ENCODE measurements at regions of chr12 and their contacts with region 1.

Region 1: GRCh38 chr12:7995266-7995963 is 37.1 kb upstream of the FOXJ2 start:
- DNase-seq: peak; percentile 74
- H3K4me3 Mint-ChIP-seq: no peak overlapping the region
- H3K27ac Mint-ChIP-seq: no peak overlapping the region
- H3K4me1 Mint-ChIP-seq: peaks cover 21% of the 10 kb centered on the region
- H3K27me3 Mint-ChIP-seq: no peaks in the 10 kb centered on the region

Region 2: DNA sequence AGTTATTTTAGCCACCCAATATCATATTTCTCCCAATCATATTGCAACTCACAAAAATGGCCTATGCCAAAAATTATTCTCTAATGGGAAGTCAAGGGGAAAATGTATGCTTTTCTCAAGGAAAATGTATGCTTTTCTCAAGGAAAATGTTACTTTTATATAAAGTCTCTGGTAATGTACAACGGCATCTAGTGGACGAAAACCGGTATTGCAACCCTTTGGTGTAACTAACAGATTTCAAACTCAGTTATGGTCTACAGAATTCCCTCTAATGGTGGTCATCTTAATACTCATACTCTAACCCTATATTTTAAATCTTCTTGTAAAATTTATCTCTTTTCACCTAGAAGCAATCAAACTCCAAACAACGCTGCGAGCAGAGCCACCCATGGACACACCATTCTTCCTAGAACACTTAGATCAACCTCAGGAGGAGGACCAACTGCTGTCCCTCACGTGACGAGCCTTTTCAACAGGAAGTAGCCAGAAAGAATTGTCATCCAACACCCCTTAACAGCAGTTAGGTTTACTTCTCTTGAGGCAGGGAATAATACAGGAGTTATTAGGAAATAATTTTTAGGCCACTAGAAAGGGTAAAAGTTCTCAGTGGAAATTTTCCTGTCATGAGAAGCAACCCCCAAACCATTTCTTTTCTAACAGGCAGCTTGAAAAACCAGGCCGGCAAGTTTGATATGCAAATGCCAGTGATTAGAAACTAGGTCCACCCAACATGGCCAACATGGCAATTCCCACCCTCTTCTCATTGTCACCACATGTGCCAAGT is 349.8 kb before region 1 on chr12:
- intact Hi-C with region 1: loop called (anchors 10 kb)
- DNase-seq: no peak
- H3K4me3 Mint-ChIP-seq: no peak overlapping the region
- H3K27ac Mint-ChIP-seq: no peak overlapping the region
- H3K4me1 Mint-ChIP-seq: peaks cover 6% of the 10 kb centered on the region
- H3K27me3 Mint-ChIP-seq: peaks cover 5% of the 10 kb centered on the region

Region 3: GRCh38 chr12:7859552-7859951 is 135.9 kb before region 1 on chr12:
- intact Hi-C with region 1: loop called (anchors 1 kb)
- DNase-seq: no peak
- H3K4me3 Mint-ChIP-seq: no peak overlapping the region
- H3K27ac Mint-ChIP-seq: no peak overlapping the region
- H3K4me1 Mint-ChIP-seq: peaks cover 21% of the 10 kb centered on the region
- H3K27me3 Mint-ChIP-seq: peaks cover 9% of the 10 kb centered on the region

Region 4: GRCh38 chr12:7959701-7960121 is 35.7 kb before region 1 on chr12:
- intact Hi-C with region 1: loop called (anchors 1 kb)
- DNase-seq: peak; percentile 56
- H3K4me3 Mint-ChIP-seq: peak overlapping the region; percentile 92
- H3K27ac Mint-ChIP-seq: peak overlapping the region; percentile 97
- H3K4me1 Mint-ChIP-seq: peaks cover 52% of the 10 kb centered on the region
- H3K27me3 Mint-ChIP-seq: no peaks in the 10 kb centered on the region

Region 5: DNA sequence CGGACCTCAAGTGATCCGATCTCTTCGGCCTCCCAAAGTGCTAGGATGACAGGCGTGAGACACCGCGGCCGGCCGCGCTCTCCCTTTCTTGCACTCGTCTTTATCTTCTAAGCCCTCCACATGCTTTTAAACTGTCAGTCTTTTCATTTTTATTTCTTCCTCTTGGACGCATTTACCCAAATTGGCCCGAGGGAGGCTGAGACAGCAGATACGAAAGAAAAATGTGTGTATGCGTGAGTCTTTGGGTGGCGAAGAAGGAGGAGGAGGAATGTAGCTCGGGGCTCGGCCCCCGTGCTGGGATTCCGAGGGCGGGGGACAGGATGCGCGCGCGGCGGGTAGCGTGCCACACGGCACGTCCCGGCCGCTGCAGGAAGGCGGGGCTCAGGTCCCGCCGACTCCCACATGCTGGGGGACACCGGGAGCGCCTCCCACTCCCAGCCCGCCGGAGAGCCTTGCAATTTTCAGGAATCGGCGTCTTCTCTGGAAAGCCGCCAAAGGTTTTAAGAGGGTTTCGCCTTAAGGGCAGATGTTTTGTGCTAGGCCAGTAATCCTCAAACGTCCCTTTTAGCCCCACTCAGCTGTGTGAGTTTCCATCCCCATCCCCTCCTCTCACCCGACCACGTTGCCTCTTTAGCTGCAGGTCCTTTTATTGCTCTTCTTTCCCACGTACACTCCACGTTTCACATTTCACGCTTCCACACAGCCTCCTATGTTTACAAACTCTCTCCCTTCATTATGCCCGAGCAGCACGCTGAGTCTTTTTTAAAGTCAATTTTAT is 24.8 kb before region 1 on chr12:
- intact Hi-C with region 1: loop called (anchors 1 kb)
- DNase-seq: peak; percentile 85
- H3K4me3 Mint-ChIP-seq: peak overlapping the region; percentile 98
- H3K27ac Mint-ChIP-seq: peak overlapping the region; percentile 100
- H3K4me1 Mint-ChIP-seq: peaks cover 40% of the 10 kb centered on the region
- H3K27me3 Mint-ChIP-seq: no peaks in the 10 kb centered on the region

Region 6: GRCh38 chr12:8026291-8026900 is 31.0 kb after region 1 on chr12:
- intact Hi-C with region 1: loop called (anchors 1 kb)
- DNase-seq: peak; percentile 96
- H3K4me3 Mint-ChIP-seq: peak overlapping the region; percentile 93
- H3K27ac Mint-ChIP-seq: peak overlapping the region; percentile 99
- H3K4me1 Mint-ChIP-seq: peaks cover 19% of the 10 kb centered on the region
- H3K27me3 Mint-ChIP-seq: no peaks in the 10 kb centered on the region

Measured in activated T-helper 1 cell treated with anti-CD3 and anti-CD28 coated beads, Interleukin-12 subunit alpha, Interleukin-12 subunit beta, Interleukin-2, Interleukin-4 antibody, amounts not matched to agents 30 ng/mL and 10 ng/mL and 1 ng/mL, durations not matched to agents 14 hours and 24 hours and 36 hours (primary cell).